Activated CD4-positive, alpha-beta T cell treated with anti-CD3 and anti-CD28 coated beads for 36 hours (primary cell): ENCODE measurements at regions of chr9 and their contacts with region 1.

Region 1: DNA sequence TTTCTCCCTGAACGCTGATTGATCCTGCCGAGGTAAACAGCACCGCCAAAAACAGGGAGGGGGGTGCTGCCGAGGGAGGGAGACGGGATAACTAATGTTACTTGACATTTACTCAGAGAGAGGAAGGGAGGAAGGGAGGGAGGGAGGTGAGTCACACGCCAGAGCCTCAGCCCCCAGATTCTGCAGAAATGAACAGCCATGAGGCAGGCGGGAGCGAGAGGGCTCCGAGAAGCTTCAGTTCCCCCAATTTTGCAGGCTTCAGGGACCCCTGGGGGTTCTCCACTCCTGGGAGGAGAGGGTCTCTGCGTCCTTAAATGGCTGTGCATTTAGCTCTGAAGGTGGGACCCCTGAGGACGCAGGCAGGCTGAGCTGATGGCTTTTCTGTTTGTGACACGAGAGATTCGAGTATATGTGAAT is 59.1 kb upstream of the IER5L start:
- DNase-seq: peak; percentile 84
- ATAC-seq: peak; percentile 80
- H3K4me3 Mint-ChIP-seq: peak overlapping the region; percentile 71
- H3K27ac Mint-ChIP-seq: peak overlapping the region; percentile 94
- H3K4me1 Mint-ChIP-seq: peaks cover 51% of the 10 kb centered on the region
- H3K27me3 Mint-ChIP-seq: no peaks in the 10 kb centered on the region

Region 2: DNA sequence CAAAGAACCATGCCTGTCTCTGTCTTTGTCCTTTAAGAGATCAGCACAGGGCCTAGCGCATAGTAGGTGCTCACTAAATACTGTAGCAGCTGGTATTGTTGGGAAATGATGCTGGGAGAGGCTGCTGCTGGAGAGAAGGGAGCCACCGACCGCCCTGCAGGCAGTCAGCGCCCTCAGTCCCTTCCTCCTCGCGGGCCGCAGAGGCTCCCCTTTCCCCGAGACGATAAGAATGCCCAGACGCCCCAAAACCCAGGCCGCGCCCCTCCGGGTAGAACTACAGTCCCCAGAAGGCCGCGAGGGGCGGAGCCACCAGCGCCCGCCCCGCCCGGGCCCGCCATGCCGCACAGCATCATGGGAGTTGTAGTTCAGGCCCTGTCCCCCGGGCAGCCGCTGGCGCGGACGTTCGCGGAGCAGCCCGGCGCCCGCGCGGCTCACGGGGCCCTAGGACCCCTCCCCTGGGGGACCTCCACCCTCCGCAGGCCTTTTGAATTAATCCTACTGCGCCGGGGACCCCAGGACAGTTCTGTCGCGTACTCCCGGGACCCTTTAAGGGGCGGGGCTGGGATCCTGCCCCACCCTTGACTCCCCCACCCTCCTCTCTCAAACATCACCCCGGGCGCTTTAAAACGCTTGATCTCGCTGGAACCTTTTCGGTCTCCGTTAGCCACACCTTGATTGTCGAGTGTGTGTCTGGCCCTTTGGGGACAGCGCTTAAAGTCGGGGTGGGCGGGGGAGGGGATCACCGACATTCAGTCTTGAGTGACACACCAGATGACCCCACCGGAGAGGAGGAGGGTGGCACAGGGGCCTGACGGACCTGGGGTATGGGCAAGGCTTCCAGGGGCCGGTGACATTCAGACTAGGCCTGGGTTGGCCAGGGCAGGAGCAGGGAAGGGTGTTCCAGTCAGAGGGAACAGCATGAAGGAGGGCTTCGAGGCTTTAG is 34.3 kb before region 1 on chr9:
- CTCF ChIA-PET with region 1: no interaction called
- POLR2A ChIA-PET with region 1: no interaction called
- intact Hi-C with region 1: loop called in 1 of 2 experiments (anchors 2 kb)
- DNase-seq: peak; percentile 95
- ATAC-seq: peak; percentile 95
- H3K4me3 Mint-ChIP-seq: peak overlapping the region; percentile 57
- H3K27ac Mint-ChIP-seq: peak overlapping the region; percentile 31
- H3K4me1 Mint-ChIP-seq: peaks cover 18% of the 10 kb centered on the region
- H3K27me3 Mint-ChIP-seq: peaks cover 3% of the 10 kb centered on the region

Region 3: GRCh38 chr9:129225815-129226214 is 11.4 kb before region 1 on chr9:
- CTCF ChIA-PET with region 1: interaction called, 3 read pairs
- POLR2A ChIA-PET with region 1: interaction called, 10 read pairs
- intact Hi-C with region 1: no loop called
- DNase-seq: peak; percentile 58
- ATAC-seq: peak; percentile 68
- H3K4me3 Mint-ChIP-seq: no peak overlapping the region
- H3K27ac Mint-ChIP-seq: no peak overlapping the region
- H3K4me1 Mint-ChIP-seq: peaks cover 26% of the 10 kb centered on the region
- H3K27me3 Mint-ChIP-seq: no peaks in the 10 kb centered on the region

Region 4: GRCh38 chr9:129317179-129318011 is 80.2 kb after region 1 on chr9:
- CTCF ChIA-PET with region 1: no interaction called
- POLR2A ChIA-PET with region 1: no interaction called
- intact Hi-C with region 1: no loop called
- DNase-seq: peak; percentile 55
- ATAC-seq: peak; percentile 29
- H3K4me3 Mint-ChIP-seq: no peak overlapping the region
- H3K27ac Mint-ChIP-seq: no peak overlapping the region
- H3K4me1 Mint-ChIP-seq: peaks cover 14% of the 10 kb centered on the region
- H3K27me3 Mint-ChIP-seq: no peaks in the 10 kb centered on the region

Region 5: GRCh38 chr9:129328377-129329028 is 91.3 kb after region 1 on chr9:
- CTCF ChIA-PET with region 1: no interaction called
- POLR2A ChIA-PET with region 1: no interaction called
- intact Hi-C with region 1: no loop called
- DNase-seq: peak; percentile 69
- ATAC-seq: peak; percentile 52
- H3K4me3 Mint-ChIP-seq: no peak overlapping the region
- H3K27ac Mint-ChIP-seq: peak overlapping the region; percentile 25
- H3K4me1 Mint-ChIP-seq: peaks cover 21% of the 10 kb centered on the region
- H3K27me3 Mint-ChIP-seq: no peaks in the 10 kb centered on the region

Region 6: DNA sequence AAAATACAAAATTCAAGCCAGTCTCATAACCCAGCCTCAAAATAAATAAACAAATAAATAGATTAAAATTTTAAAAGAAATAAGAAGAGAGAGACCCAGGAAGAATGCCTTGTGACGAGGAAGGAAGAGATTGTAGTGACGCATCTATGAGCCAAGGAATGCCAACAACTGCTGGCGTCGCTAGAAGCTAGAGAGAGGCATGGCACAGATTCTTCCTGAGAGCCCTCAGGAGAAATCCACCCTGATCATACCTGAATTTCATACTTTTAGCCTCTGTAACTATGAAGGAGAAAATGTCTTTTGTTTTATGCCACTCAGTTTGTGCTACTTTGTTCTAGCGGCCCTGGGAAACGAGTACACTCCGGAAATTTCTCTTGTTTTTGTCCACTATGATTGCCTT is 279.8 kb after region 1 on chr9:
- CTCF ChIA-PET with region 1: no interaction called
- POLR2A ChIA-PET with region 1: no interaction called
- intact Hi-C with region 1: no loop called
- DNase-seq: no peak
- ATAC-seq: no peak
- H3K4me3 Mint-ChIP-seq: no peak overlapping the region
- H3K27ac Mint-ChIP-seq: no peak overlapping the region
- H3K4me1 Mint-ChIP-seq: no peaks in the 10 kb centered on the region
- H3K27me3 Mint-ChIP-seq: no peaks in the 10 kb centered on the region

Region 7: GRCh38 chr9:129712634-129713401 is 475.6 kb after region 1 on chr9:
- CTCF ChIA-PET with region 1: no interaction called
- POLR2A ChIA-PET with region 1: no interaction called
- intact Hi-C with region 1: no loop called
- DNase-seq: no peak
- ATAC-seq: no peak
- H3K4me3 Mint-ChIP-seq: no peak overlapping the region
- H3K27ac Mint-ChIP-seq: no peak overlapping the region
- H3K4me1 Mint-ChIP-seq: peaks cover 17% of the 10 kb centered on the region
- H3K27me3 Mint-ChIP-seq: peaks cover 5% of the 10 kb centered on the region